PC-3 (cell line): ENCODE measurements at regions of chr15 and their contacts with region 1.

Region 1: DNA sequence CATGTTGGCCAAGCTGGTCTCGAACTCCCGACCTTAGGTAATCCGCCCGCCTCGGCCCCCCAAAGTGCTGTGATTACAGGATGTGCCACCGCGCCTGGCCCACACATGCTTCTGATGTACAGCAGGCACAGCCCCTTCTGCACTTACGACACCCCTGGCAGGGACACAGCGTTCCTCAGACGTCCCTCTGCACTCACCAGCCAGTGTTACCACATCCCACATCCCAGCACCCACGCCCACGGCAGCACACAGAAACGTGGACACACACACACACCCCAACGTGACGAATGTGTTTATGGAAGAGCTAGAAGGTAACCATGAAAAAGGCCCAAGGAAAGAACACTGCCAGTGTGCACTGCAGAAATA is 576 bp upstream of the RPAP1 start:
- DNase-seq: no peak
- ATAC-seq: no peak
- H3K4me3 ChIP-seq: peak overlapping the region; percentile 92
- H3K27ac ChIP-seq: no peak overlapping the region
- H3K4me1 ChIP-seq: peaks cover 23% of the 10 kb centered on the region
- H3K27me3 ChIP-seq: no peaks in the 10 kb centered on the region
- CTCF ChIP-seq: no peak

Region 2: DNA sequence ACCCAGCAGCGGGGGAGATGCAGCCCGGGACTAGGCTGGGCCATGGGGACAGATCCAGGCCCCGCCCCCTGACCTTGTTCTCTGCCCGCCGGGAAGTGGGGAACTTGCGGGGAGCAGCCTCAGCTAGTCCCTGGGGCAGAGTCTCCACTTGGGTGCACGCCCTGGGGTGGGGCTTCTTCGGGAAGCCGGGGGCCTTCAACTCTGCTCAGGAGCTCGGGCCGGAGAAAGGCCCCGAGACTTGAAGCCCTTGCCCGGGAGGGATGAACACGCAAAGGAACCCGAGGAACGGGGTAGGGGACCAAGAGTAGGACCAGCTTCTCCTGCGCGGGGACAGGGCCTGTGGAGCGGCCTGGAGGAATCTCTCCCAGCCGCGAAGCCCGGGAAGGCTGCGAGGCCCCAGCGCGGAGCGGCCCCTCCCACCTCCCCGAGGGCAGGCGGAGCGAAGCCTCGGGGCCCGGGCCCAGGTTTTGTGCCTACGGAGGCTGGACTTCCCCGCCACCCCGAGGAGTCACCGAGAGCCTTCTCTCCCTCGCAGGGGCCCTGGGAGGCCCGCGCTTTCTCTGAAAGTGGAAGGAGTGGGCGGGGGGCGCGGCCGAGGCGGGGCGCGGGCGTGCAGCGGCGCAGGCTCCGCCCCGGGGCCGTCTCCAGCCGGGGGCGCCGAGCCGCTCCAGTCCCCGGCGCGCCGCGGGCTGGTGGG is 51.3 kb before region 1 on chr15 and contains the start of gene ITPKA:
- CTCF ChIA-PET with region 1: no interaction called
- POLR2A ChIA-PET with region 1: interaction called, 5 read pairs
- intact Hi-C with region 1: loop called (anchors 10 kb)
- DNase-seq: peak; percentile 70
- ATAC-seq: peak; percentile 65
- H3K4me3 ChIP-seq: peak within 1 kb of the TSS; percentile 73
- H3K27ac ChIP-seq: peak within 1 kb of the TSS; percentile 49
- H3K4me1 ChIP-seq: peaks cover 38% of the 10 kb centered on the region
- H3K27me3 ChIP-seq: no peaks in the 10 kb centered on the region
- CTCF ChIP-seq: no peak
- total RNA-seq, gene ITPKA: 7.8 and 16.8 TPM in 2 replicates

Region 3: GRCh38 chr15:41568350-41569017 is 23.9 kb after region 1 on chr15:
- CTCF ChIA-PET with region 1: no interaction called
- POLR2A ChIA-PET with region 1: no interaction called
- intact Hi-C with region 1: no loop called
- DNase-seq: no peak
- ATAC-seq: no peak
- H3K4me3 ChIP-seq: no peak overlapping the region
- H3K27ac ChIP-seq: no peak overlapping the region
- H3K4me1 ChIP-seq: no peaks in the 10 kb centered on the region
- H3K27me3 ChIP-seq: no peaks in the 10 kb centered on the region
- CTCF ChIP-seq: no peak

Region 4: GRCh38 chr15:41660235-41661077 is 115.8 kb after region 1 on chr15 and contains the start of gene MGA:
- CTCF ChIA-PET with region 1: no interaction called
- POLR2A ChIA-PET with region 1: interaction called, 11 read pairs
- intact Hi-C with region 1: no loop called
- DNase-seq: peak; percentile 94
- ATAC-seq: peak; percentile 78
- H3K4me3 ChIP-seq: peak within 1 kb of the TSS; percentile 68
- H3K27ac ChIP-seq: peak within 1 kb of the TSS; percentile 76
- H3K4me1 ChIP-seq: peaks cover 31% of the 10 kb centered on the region
- H3K27me3 ChIP-seq: no peaks in the 10 kb centered on the region
- CTCF ChIP-seq: peak; percentile 16; the same call in 1 of the 2 replicates
- total RNA-seq, gene MGA: 19.0 and 21.2 TPM in 2 replicates